Activated CD4-positive, alpha-beta memory T cell treated with anti-CD3 and anti-CD28 coated beads for 36 hours (primary cell): ENCODE measurements at regions of chr2 and their contacts with region 1.

Region 1: DNA sequence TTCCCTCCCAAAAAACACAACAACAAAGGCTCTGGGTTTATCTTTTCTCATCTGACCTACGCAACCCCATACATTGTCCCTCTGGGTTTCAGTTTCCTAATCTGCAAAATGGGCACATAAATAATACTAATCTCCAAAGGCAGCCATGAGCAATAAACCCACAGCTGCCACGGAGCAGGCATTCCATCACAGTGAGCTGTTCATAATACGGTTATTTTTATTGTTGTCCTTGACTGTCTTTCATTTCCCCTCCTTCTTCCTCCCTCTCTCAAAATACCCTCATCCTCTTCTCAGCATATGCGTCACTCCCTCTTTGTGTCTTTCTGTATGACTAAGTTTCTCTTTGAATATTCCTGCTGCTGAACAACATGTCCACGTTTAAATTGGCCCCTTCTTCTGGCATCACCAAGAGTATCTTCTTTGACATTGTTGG is 129.8 kb upstream of the CAB39 start:
- DNase-seq: peak; percentile 69
- H3K4me3 Mint-ChIP-seq: no peak overlapping the region
- H3K27ac Mint-ChIP-seq: peak overlapping the region; percentile 79
- H3K4me1 Mint-ChIP-seq: peaks cover 24% of the 10 kb centered on the region
- H3K27me3 Mint-ChIP-seq: no peaks in the 10 kb centered on the region

Region 2: DNA sequence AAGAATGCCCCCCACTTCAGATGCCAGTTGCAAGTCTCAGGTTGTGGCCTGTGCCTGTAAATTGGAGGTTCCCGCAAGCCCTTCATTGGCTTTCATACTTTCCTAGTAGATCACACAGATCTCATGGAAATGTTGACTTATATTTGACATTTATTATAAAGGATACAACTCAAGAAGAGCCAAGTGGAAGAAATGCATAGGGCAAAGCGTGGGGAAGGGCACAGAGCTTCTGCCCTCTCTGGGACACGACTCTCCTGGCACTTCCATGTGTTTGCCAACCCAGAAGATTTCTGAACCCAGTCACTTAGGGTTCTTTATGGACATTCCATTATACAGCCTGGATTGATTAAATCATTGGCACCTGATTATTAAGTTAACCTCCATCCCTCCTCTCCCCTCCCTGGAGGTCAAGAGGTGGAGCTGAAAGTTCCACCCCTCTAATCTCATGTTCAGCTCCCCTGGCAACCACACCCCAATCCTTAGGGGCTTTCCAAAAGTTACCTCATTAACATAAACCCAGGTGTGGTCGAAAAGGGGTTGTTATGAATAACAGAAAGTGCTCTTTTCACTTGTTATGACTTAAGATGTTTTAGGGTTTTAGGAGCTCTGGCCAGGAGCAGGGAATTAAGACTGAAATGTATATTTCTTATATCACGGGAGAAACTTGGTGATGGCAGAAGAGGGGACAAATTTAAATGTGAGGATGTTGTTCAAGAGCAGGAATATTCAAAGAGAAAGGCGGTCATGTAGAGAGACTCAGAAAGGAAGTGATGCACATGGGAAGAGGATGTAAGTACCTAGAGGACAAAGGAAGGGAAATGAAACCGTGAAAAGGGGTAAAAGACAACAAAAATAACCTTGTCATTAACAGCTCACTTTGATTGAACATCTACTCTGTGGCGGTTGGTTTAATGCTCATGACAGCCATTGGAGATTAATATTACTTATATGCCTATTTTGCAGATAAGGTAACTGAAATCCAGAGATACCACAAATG is 135.1 kb before region 1 on chr2:
- CTCF ChIA-PET with region 1: no interaction called
- POLR2A ChIA-PET with region 1: interaction called, 4 read pairs
- intact Hi-C with region 1: loop called (anchors 5 kb)
- DNase-seq: peak; percentile 53
- H3K4me3 Mint-ChIP-seq: peak overlapping the region; percentile 40
- H3K27ac Mint-ChIP-seq: peak overlapping the region; percentile 80
- H3K4me1 Mint-ChIP-seq: peaks cover 59% of the 10 kb centered on the region
- H3K27me3 Mint-ChIP-seq: no peaks in the 10 kb centered on the region

Region 3: DNA sequence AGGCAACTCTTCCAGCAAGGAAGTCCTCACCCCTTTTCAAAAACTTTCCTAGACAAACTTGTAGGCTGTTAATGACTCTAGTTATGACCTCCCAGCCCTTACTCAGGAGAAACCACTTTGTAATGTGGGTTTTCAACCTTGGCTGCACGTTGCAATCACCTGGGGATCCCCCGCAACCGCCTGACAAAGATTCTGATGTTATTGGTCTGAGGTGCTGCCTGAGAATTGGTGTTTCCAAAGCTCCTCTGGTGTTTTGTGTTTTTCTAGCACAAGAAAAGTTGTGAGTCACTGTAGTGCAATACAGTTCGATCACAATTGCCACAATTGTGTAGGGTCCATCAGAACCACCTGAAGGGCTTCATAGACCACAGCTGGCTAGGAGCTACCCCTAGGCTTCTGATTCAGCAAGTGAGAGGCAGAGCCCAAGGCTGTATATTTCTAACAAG is 45.3 kb before region 1 on chr2:
- CTCF ChIA-PET with region 1: no interaction called
- POLR2A ChIA-PET with region 1: no interaction called
- intact Hi-C with region 1: loop called (anchors 5 kb)
- DNase-seq: peak; percentile 72
- H3K4me3 Mint-ChIP-seq: no peak overlapping the region
- H3K27ac Mint-ChIP-seq: peak overlapping the region; percentile 20
- H3K4me1 Mint-ChIP-seq: peaks cover 25% of the 10 kb centered on the region
- H3K27me3 Mint-ChIP-seq: no peaks in the 10 kb centered on the region

Region 4: GRCh38 chr2:230569298-230569697 is 13.6 kb before region 1 on chr2:
- CTCF ChIA-PET with region 1: no interaction called
- POLR2A ChIA-PET with region 1: no interaction called
- intact Hi-C with region 1: loop called (anchors 2 kb)
- DNase-seq: peak; percentile 41
- H3K4me3 Mint-ChIP-seq: no peak overlapping the region
- H3K27ac Mint-ChIP-seq: no peak overlapping the region
- H3K4me1 Mint-ChIP-seq: peaks cover 12% of the 10 kb centered on the region
- H3K27me3 Mint-ChIP-seq: no peaks in the 10 kb centered on the region

Region 5: DNA sequence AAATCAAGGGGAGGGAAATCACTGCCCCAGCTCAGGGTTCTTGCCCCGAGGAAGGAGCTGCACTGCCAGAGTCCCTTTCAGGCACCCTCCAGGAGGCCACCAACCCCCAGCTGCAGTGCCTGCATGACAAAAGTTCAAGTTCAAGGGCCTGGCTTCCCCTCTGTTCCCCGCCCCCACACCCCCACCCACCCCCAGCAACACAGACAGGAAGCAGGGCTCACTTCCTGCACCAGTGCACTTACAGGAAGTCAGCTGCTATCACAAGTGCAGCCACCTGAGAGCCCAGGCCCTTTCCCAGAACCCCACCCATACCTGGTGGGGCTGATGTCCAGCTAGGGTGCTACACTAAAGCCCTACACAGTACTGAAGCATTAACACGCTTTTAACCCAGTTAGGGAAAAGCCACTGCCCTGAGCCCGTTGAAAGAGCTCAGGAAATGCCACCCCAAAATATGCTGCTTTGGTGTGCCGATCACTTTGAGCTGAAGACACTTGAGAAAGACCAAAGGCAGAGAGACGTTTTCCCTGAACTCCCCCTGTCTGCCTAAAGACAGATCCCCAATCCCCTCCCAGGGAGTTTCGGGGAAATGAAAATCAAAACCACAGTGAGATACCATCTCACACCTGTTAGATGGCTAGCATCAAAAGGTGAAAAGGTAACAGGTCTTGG is 19.8 kb after region 1 on chr2:
- CTCF ChIA-PET with region 1: no interaction called
- POLR2A ChIA-PET with region 1: interaction called, 4 read pairs
- intact Hi-C with region 1: loop called (anchors 1 kb)
- DNase-seq: peak; percentile 75
- H3K4me3 Mint-ChIP-seq: peak overlapping the region; percentile 31
- H3K27ac Mint-ChIP-seq: peak overlapping the region; percentile 89
- H3K4me1 Mint-ChIP-seq: peaks cover 56% of the 10 kb centered on the region
- H3K27me3 Mint-ChIP-seq: no peaks in the 10 kb centered on the region